Dendritic cell treated with granulocyte-macrophage colony-stimulating factor and Interleukin-4, amounts not matched to agents 40 ng/mL and 50 ng/mL, for 4 days (primary cell): ENCODE measurements at regions of chr17 and their contacts with region 1.

Region 1: GRCh38 chr17:57130761-57131461 is 45.9 kb downstream of the AKAP1 start:
- H3K4me3 Mint-ChIP-seq: no peak overlapping the region
- H3K27ac Mint-ChIP-seq: no peak overlapping the region
- H3K4me1 Mint-ChIP-seq: peaks cover 6% of the 10 kb centered on the region
- H3K27me3 Mint-ChIP-seq: peaks cover 15% of the 10 kb centered on the region

Region 2: DNA sequence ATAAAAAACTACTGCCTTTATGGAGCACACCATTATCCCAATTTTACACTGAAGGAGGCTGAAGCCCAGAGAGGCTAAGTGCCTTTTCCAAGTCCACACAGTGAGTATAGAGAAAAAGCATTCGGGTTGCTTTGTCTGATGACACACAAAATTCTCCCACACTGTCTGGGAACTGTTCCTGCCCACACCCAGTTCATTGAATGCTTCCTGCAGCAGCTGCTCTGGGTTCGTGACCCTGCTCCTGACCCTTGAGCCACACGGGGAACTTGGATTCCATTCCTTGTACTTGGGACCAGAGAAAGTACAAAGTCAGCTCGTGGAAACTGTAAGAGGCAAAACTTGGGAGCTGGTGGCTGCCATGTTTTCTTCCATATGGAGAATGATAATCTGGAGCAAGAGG is 12.0 kb after region 1 on chr17:
- intact Hi-C with region 1: no loop called
- H3K4me3 Mint-ChIP-seq: no peak overlapping the region
- H3K27ac Mint-ChIP-seq: no peak overlapping the region
- H3K4me1 Mint-ChIP-seq: peaks cover 13% of the 10 kb centered on the region
- H3K27me3 Mint-ChIP-seq: peaks cover 6% of the 10 kb centered on the region

Region 3: GRCh38 chr17:57747221-57748017 is 616.5 kb after region 1 on chr17:
- intact Hi-C with region 1: loop called (anchors 10 kb)
- H3K4me3 Mint-ChIP-seq: no peak overlapping the region
- H3K27ac Mint-ChIP-seq: no peak overlapping the region
- H3K4me1 Mint-ChIP-seq: peaks cover 49% of the 10 kb centered on the region
- H3K27me3 Mint-ChIP-seq: peaks cover 4% of the 10 kb centered on the region

Region 4: GRCh38 chr17:57783106-57783742 is 652.3 kb after region 1 on chr17:
- intact Hi-C with region 1: loop called (anchors 2 kb)
- H3K4me3 Mint-ChIP-seq: no peak overlapping the region
- H3K27ac Mint-ChIP-seq: no peak overlapping the region
- H3K4me1 Mint-ChIP-seq: peaks cover 7% of the 10 kb centered on the region
- H3K27me3 Mint-ChIP-seq: peaks cover 17% of the 10 kb centered on the region